K562 (cell line): ENCODE measurements at regions of chr11 and their contacts with region 1.

Region 1: DNA sequence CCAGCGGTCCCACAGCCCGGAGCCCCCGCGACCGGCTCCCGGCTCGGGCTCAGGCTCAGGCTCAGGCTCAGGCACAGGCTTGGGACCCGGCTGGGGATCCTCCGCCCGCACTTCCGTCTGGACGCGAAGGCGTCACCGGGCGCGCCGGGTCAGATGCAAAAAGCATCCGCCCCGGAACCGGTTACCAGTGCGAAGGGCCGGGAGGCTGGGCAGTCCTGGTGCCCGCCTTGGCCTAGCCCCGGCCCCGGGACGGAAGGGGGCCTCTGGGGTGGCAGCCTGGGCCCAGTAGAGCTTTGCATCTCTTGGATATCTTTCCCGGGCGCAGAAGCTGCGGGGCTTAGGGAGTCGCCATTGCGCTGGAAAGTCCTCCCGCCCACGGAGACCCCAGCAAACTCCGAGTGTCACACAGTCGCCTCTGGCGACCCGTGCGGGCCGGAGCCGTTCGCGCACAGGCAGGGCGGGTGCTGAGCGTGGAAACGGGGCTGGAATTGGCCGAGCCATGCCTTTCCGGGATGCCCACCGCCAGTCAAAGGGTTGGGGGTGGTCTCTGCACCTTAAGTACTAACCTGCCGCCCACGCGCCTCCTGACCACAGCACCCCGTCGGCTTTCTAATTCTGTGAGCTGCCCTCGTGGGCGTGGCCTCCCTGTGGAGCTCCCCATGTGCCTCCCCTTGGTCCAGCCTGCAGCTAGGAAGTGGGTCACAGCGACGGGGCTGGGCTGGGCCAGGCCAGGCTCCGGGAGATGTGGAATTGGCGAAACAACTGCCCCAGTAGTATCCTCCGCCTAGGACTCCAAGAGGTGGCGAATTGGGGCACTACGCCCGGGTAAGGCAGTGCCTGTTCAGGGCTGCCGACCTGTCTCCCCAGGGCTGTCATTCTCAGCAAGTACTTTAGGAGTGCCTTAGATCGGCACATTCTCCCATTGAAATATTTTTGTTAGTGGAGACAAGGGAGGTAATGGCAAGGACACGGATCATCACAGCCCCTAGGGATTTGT is at the start of gene TMEM9B:
- DNase-seq: peak; percentile 83 to 92 (median 86)
- ATAC-seq: peak; percentile 92
- H3K4me3 ChIP-seq: peak within 1 kb of the TSS; percentile 96
- H3K27ac ChIP-seq: peak within 1 kb of the TSS; percentile 93
- H3K4me1 ChIP-seq: peaks cover 13 to 22% of the 10 kb centered on the region in 2 experiments; a peak in 4 of 5 replicates
- H3K27me3 ChIP-seq: no peaks in the 10 kb centered on the region
- CTCF ChIP-seq: no peak
- EP300 ChIP-seq: no peak
- POLR2A ChIP-seq: peak; percentile 94
- RAD21 ChIP-seq: no peak; a peak in 1 of 4 replicates
- polyA plus RNA-seq, gene TMEM9B: 7.7 to 9.6 TPM

Region 2: GRCh38 chr11:8577791-8578581 is 386.6 kb before region 1 on chr11:
- CTCF ChIA-PET with region 1: no interaction called
- POLR2A ChIA-PET with region 1: no interaction called
- in situ Hi-C with region 1: no loop called
- intact Hi-C with region 1: loop called (anchors 10 kb)
- DNase-seq: no peak
- ATAC-seq: no peak
- H3K4me3 ChIP-seq: no peak overlapping the region
- H3K27ac ChIP-seq: no peak overlapping the region
- H3K4me1 ChIP-seq: no peaks in the 10 kb centered on the region
- H3K27me3 ChIP-seq: no peaks in the 10 kb centered on the region
- CTCF ChIP-seq: no peak
- EP300 ChIP-seq: no peak
- POLR2A ChIP-seq: no peak
- RAD21 ChIP-seq: no peak

Region 3: GRCh38 chr11:8688414-8689362 is 275.9 kb before region 1 on chr11:
- CTCF ChIA-PET with region 1: no interaction called
- POLR2A ChIA-PET with region 1: interaction called, 4 read pairs
- in situ Hi-C with region 1: no loop called
- intact Hi-C with region 1: loop called (anchors 2 kb)
- DNase-seq: peak; percentile 89 to 98 (median 92)
- ATAC-seq: peak; percentile 91
- H3K4me3 ChIP-seq: peak overlapping the region; percentile 49
- H3K27ac ChIP-seq: peak overlapping the region; percentile 96
- H3K4me1 ChIP-seq: peaks cover 13 to 18% of the 10 kb centered on the region in 2 experiments
- H3K27me3 ChIP-seq: no peaks in the 10 kb centered on the region
- CTCF ChIP-seq: peak; percentile 11 to 27 (median 21); a peak in 3 of 6 replicates
- EP300 ChIP-seq: peak; percentile 36; the same call in 1 of the 2 replicates
- POLR2A ChIP-seq: peak; percentile 92
- RAD21 ChIP-seq: peak in 1 of 2 experiments; percentile 44

Region 4: GRCh38 chr11:8744423-8744822 is 220.2 kb before region 1 on chr11:
- CTCF ChIA-PET with region 1: no interaction called
- POLR2A ChIA-PET with region 1: no interaction called
- in situ Hi-C with region 1: no loop called
- intact Hi-C with region 1: no loop called
- DNase-seq: no peak
- ATAC-seq: no peak
- H3K4me3 ChIP-seq: no peak overlapping the region
- H3K27ac ChIP-seq: no peak overlapping the region
- H3K4me1 ChIP-seq: no peaks in the 10 kb centered on the region
- H3K27me3 ChIP-seq: peaks cover 4 to 29% of the 10 kb centered on the region in 2 experiments; a peak in 4 of 5 replicates
- CTCF ChIP-seq: no peak
- EP300 ChIP-seq: no peak
- POLR2A ChIP-seq: no peak
- RAD21 ChIP-seq: no peak

Region 5: DNA sequence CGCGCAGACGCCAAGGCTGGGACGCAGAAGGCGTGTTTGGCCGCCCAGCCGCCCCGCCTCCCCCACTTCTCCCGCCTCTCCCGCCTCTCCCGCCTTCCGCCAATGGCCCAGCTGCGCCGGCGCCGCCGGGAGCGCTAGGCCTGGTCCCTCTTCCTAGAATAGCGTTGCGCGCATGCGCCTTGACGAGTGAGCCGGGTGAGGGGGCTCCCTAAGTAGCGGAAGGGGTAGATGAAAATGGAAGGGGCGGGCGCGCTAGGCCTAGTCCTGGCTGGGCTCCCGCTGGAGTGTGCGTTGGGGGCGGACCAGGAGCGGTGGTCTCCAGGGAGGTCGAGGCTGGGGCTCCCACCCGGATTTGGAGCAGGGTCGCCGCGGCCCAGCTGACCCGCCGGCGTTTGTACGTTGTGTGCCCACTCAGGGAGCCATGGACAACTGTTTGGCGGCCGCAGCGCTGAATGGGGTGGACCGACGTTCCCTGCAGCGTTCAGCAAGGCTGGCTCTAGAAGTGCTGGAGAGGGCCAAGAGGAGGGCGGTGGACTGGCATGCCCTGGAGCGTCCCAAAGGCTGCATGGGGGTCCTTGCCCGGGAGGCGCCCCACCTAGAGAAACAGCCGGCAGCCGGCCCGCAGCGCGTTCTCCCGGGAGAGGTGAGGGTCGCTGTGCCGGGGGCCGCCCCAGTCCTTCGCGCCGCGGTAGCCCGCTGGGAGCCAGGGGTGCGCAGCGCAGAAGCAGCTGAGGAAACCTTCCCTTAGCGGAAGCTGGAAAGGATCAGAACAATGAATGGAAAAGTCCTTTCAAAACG is 53.4 kb before region 1 on chr11 and contains the start of gene AKIP1:
- CTCF ChIA-PET with region 1: interaction called, 3 read pairs
- POLR2A ChIA-PET with region 1: no interaction called
- in situ Hi-C with region 1: no loop called
- intact Hi-C with region 1: loop called (anchors 1 kb)
- DNase-seq: peak; percentile 95 to 97 (median 97)
- ATAC-seq: peak; percentile 95
- H3K4me3 ChIP-seq: peak within 1 kb of the TSS; percentile 94
- H3K27ac ChIP-seq: peak within 1 kb of the TSS; percentile 79
- H3K4me1 ChIP-seq: peaks cover 15 to 29% of the 10 kb centered on the region in 2 experiments
- H3K27me3 ChIP-seq: no peaks in the 10 kb centered on the region
- CTCF ChIP-seq: no peak
- EP300 ChIP-seq: no peak
- POLR2A ChIP-seq: peak; percentile 80
- RAD21 ChIP-seq: no peak
- polyA plus RNA-seq, gene AKIP1: 9.0 to 15.1 TPM

Region 6: GRCh38 chr11:9003573-9004309 is 39.1 kb after region 1 on chr11 and contains the start of gene NRIP3:
- CTCF ChIA-PET with region 1: no interaction called
- POLR2A ChIA-PET with region 1: interaction called, 3 read pairs
- in situ Hi-C with region 1: no loop called
- intact Hi-C with region 1: loop called (anchors 5 kb)
- DNase-seq: peak; percentile 83 to 91 (median 90)
- ATAC-seq: peak; percentile 92
- H3K4me3 ChIP-seq: peak within 1 kb of the TSS; percentile 48
- H3K27ac ChIP-seq: peak within 1 kb of the TSS; percentile 63
- H3K4me1 ChIP-seq: peaks cover 15 to 23% of the 10 kb centered on the region in 2 experiments
- H3K27me3 ChIP-seq: no peaks in the 10 kb centered on the region; a peak in 2 of 5 replicates
- CTCF ChIP-seq: 0 out of 6 replicates have a peak, but pooled peaks of 1 of the 3 experiments have one; percentile 9
- EP300 ChIP-seq: no peak
- POLR2A ChIP-seq: peak; percentile 80
- RAD21 ChIP-seq: 0 out of 4 replicates have a peak, but pooled peaks of 1 of the 2 experiments have one; percentile 3
- polyA plus RNA-seq, gene NRIP3: 4.4 to 6.4 TPM